Ovary (tissue), 10 donors: ENCODE measurements at regions of chr2 and their contacts with region 1.

Region 1: GRCh38 chr2:66434679-66435548 is at the start of gene MEIS1:
- DNase-seq: peak; percentile 90 to 96 (median 93)
- H3K4me3 ChIP-seq: peak within 1 kb of the TSS; percentile 80
- H3K27ac ChIP-seq: peak within 1 kb of the TSS; percentile 84 to 89
- H3K4me1 ChIP-seq: no peaks in the 10 kb centered on the region
- H3K27me3 ChIP-seq: no peaks in the 10 kb centered on the region
- CTCF ChIP-seq: no peak
- EP300 ChIP-seq: peak; percentile 43
- POLR2A ChIP-seq: peak; percentile 97
- total RNA-seq, gene MEIS1: 33.9 to 163 (median 92.3) TPM

Region 2: GRCh38 chr2:65722028-65722778 is 712.7 kb before region 1 on chr2:
- intact Hi-C with region 1: loop called in 1 of 4 experiments (anchors 10 kb)
- DNase-seq: peak; percentile 55 to 73 (median 61)
- H3K4me3 ChIP-seq: no peak overlapping the region
- H3K27ac ChIP-seq: no peak overlapping the region
- H3K4me1 ChIP-seq: no peaks in the 10 kb centered on the region
- H3K27me3 ChIP-seq: no peaks in the 10 kb centered on the region
- CTCF ChIP-seq: peak in 2 of 3 donors; percentile 29 to 36
- EP300 ChIP-seq: no peak
- POLR2A ChIP-seq: no peak

Region 3: DNA sequence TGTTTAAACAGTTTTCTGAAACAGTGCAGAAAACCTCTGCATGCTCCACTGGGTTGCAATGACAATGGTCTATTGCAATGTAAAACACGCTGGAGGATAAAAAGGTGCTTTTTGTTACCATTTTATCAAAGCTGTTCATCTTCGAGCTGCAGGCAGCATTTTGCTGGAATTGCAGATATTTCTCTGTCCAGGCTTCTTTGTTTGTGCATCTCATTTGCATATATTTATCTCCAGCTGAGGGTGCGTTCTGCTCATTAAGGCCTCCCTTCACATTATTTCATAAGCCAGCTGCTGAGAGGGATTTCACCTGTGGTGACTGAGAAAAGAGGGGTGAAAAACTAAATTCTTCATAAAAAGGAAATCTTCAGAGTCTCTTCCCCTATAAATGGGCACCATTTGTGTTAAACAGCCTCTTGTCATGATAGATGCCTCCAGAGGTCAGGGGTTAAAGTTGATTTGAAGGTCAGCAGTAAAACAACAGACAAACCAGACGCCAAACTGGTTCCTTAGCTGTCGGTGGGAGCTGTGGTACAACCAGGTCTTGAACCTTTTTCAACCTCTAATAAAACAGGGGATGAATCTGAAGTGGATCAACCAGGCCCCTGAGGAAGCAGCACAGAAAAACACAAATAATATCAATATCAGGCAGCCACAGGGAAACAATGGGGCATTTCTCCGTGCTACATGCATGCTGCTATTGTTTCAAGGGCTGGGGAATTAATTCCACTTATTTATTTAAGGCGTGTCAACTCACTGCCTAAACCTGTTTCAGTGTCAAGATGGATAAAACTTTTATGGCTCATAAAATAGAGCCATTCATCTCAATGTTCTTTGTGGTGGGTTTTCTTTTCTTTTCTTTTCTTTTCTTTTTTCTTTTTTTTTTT is 265.1 kb after region 1 on chr2:
- intact Hi-C with region 1: loop called (anchors 2 to 10 kb)
- DNase-seq: no peak
- H3K4me3 ChIP-seq: peak overlapping the region; percentile 16
- H3K27ac ChIP-seq: no peak overlapping the region
- H3K4me1 ChIP-seq: peaks cover 4% of the 10 kb centered on the region
- H3K27me3 ChIP-seq: no peaks in the 10 kb centered on the region
- CTCF ChIP-seq: no peak
- EP300 ChIP-seq: no peak
- POLR2A ChIP-seq: no peak

Region 4: DNA sequence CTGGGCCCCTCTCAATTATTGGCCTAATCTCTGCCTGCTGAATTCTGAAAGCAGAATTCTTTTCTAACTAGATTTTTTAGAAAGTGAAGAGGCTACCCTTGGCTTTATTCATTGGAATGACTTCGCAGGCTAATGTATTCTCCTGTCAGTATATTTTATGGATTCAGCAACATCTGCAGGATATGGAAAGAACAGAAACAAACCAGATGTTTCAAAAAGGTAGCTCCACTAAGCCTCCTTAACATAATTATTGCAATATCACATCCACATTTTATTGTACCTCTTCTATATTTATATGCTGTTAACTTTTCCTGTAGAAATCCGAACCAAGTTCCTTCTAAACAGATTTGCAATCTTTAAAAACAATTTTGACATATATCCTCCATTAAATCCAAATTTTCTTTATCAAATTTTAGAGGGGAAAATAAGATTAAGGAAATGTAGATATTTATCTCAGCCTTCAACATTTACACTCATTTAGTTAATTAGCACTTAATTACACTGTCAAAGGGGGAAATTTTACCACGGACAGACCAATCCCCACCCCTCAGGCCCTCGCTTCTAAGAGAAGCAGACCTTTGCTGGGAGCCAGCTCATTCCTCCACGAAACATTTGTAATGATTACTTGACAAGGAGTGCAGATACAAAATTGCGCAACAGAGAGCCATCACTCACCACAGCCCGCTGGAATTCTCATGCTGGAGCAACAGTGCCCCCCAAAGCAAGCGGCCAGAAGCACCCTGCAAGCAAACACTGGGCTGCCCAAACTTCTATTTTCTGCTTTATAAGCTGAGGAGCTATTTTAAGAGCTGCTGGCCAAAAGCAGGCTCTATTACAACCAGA is 1215.6 kb after region 1 on chr2:
- intact Hi-C with region 1: loop called in 2 of 4 experiments (anchors 5 to 10 kb)
- DNase-seq: peak; percentile 77 to 88 (median 84)
- H3K4me3 ChIP-seq: no peak overlapping the region
- H3K27ac ChIP-seq: no peak overlapping the region
- H3K4me1 ChIP-seq: peaks cover 10% of the 10 kb centered on the region
- H3K27me3 ChIP-seq: no peaks in the 10 kb centered on the region
- CTCF ChIP-seq: peak; percentile 32 to 70 (median 43)
- EP300 ChIP-seq: no peak
- POLR2A ChIP-seq: no peak

Region 5: DNA sequence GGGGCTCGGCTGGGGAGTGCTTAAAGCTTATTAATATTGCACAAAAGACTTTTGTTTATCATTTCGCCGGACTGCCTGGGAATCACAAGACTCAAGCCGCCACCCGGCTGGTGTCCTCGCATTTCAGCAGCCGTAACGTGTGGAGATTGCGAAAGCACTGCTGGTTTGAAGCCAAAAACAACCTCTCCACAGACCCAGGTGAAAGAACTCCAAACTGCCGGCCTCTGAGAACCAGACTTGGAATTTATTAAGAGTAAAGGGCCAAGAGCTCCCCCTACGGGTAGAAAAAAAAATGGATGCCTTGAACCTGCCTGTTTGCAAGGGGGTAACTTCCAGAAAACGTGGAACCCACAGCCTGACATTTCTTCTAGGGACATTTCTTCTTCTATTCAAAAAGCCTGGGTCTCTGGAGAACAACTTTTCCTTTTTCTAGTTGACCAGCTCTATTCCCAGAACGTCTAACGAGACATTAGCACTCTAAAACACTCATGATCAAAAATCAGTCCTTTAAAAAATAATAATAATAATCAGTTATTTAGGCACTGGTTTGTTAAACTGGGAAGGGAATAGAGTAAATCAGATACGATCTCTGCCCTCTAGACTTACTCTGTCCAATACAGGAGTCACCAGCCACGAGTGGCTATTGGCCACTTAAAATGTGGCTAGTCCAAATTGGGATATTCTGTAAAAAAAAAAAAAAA is 1411.6 kb after region 1 on chr2:
- intact Hi-C with region 1: loop called in 3 of 4 experiments (anchors 5 to 10 kb)
- DNase-seq: peak; percentile 85 to 95 (median 90)
- H3K4me3 ChIP-seq: no peak overlapping the region
- H3K27ac ChIP-seq: peak overlapping the region in 1 of 2 donors; percentile 22
- H3K4me1 ChIP-seq: peaks cover 7% of the 10 kb centered on the region
- H3K27me3 ChIP-seq: no peaks in the 10 kb centered on the region
- CTCF ChIP-seq: peak; percentile 56 to 84 (median 62)
- EP300 ChIP-seq: no peak
- POLR2A ChIP-seq: no peak